ENCODE measurements at regions of chr5 and their contacts with region 1.

Region 1: DNA sequence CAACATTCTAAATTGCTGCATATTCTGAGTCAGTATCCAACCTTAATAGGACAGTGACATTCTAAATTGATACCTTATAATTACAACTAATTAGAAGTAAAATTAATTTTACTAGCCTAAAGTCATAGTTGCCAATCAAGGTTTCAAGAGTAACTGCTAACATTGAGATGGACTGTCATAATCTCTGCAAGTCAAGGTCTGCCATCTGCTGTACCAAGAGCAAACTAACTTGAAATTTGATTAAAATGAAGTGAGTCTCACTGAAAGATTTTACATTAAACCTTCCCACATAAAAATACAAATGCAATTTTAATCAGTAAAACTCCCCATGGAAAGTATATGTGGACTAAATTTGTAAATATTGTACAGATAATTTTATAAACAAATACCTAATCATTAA is 235.3 kb downstream of the PRDM9 start:
- DNase-seq: peak; percentile 11
- H3K4me3 Mint-ChIP-seq: no peak overlapping the region
- H3K27ac Mint-ChIP-seq: no peak overlapping the region
- H3K4me1 Mint-ChIP-seq: no peaks in the 10 kb centered on the region
- H3K27me3 Mint-ChIP-seq: no peaks in the 10 kb centered on the region
- CTCF ChIP-seq: peak; percentile 17

Region 2: DNA sequence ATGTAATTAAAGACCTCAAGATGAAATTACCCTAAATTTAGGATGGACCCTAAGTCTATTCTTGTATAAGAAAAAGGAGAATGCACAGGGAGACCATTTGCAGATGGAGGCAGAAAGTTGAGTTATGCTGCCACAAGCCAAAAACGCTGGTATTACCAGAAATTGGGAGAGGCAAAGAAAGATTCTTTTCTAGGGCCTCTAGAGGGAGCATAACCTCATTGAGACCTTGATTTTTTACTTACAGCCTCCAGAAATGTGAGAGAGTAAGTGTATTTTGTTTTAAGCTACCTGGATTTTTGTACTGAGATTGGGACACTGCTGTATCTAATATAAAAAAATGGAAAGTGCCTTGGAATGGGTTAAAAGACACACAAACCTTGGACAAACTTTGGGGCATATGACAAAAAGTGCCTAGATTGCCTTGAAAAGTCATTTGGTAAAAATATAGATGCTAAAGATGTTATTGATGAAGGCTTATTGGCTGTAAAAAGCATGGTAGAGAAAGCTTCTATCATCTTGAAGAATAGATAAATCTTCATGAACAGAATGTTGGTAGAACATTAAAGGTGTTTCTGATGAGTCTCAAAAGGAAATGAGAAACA is 409.9 kb before region 1 on chr5:
- CTCF ChIA-PET with region 1: interaction called, 4 read pairs
- POLR2A ChIA-PET with region 1: no interaction called
- intact Hi-C with region 1: loop called (anchors 5 kb)
- DNase-seq: peak; percentile 51
- H3K4me3 Mint-ChIP-seq: no peak overlapping the region
- H3K27ac Mint-ChIP-seq: no peak overlapping the region
- H3K4me1 Mint-ChIP-seq: no peaks in the 10 kb centered on the region
- H3K27me3 Mint-ChIP-seq: no peaks in the 10 kb centered on the region
- CTCF ChIP-seq: peak; percentile 55

Region 3: DNA sequence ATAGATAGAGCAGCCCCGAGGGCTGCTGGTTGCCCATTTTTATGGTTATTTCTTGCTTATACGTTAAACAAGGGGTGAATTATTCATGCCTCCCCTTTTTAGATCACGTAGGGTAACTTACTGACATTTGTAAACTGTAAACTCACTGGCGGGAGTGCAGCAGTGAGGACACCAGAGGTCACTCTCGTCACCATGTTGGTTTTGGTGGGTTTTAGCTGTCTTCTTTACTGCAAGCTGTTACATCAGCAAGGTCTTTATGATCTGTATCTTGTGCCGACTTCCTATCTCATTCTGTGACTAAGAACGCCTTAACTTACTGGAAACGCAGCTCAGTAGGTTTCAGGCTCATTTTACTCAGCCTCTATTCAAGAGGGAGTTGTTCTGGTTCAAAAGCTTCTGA is 390.3 kb before region 1 on chr5:
- CTCF ChIA-PET with region 1: no interaction called
- POLR2A ChIA-PET with region 1: no interaction called
- intact Hi-C with region 1: loop called (anchors 1 kb)
- DNase-seq: peak; percentile 39
- H3K4me3 Mint-ChIP-seq: no peak overlapping the region
- H3K27ac Mint-ChIP-seq: no peak overlapping the region
- H3K4me1 Mint-ChIP-seq: no peaks in the 10 kb centered on the region
- H3K27me3 Mint-ChIP-seq: no peaks in the 10 kb centered on the region
- CTCF ChIP-seq: peak; percentile 34

Region 4: DNA sequence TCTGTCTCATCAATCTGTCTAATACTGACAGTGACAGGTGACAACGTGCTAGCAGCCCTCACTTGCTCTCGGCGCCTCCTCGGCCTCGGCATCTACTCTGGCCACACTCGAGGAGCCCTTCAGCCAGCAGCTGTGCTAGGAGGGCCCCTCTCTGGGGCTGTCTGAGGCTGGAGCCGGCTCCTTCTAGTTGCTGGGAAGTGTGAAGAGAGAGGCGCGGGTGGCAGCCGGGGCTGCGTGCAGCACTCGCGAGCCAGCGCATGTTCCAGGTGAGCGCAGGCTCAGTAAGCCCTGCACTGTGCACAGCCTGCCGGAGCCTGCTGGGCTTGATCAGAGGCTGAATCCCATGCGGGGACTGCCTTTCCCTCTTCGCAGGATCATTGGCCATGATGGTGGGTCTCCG is 571.4 kb after region 1 on chr5:
- CTCF ChIA-PET with region 1: no interaction called
- POLR2A ChIA-PET with region 1: no interaction called
- intact Hi-C with region 1: no loop called
- DNase-seq: no peak
- H3K4me3 Mint-ChIP-seq: no peak overlapping the region
- H3K27ac Mint-ChIP-seq: no peak overlapping the region
- H3K4me1 Mint-ChIP-seq: no peaks in the 10 kb centered on the region
- H3K27me3 Mint-ChIP-seq: no peaks in the 10 kb centered on the region
- CTCF ChIP-seq: no peak

Region 5: DNA sequence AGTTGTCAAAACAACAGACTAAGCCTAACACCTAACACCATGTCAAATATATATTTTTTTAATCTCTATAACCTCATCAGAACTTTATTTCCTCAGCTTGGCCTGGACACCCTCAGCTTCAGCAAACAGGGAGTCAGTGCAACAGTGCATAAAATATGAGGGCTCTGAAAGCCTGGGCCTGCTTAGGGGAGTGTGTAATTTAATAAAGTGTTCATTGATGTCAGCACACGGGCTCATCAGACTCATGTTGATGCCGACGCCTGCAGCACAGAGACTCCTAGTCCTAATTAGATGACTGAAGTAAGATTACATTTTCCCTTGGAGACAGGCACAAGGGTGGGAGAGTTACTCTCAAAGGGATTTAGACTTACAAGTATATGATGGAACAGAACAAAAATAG is 864.3 kb after region 1 on chr5:
- CTCF ChIA-PET with region 1: no interaction called
- POLR2A ChIA-PET with region 1: no interaction called
- intact Hi-C with region 1: no loop called
- DNase-seq: no peak
- H3K4me3 Mint-ChIP-seq: no peak overlapping the region
- H3K27ac Mint-ChIP-seq: no peak overlapping the region
- H3K4me1 Mint-ChIP-seq: no peaks in the 10 kb centered on the region
- H3K27me3 Mint-ChIP-seq: no peaks in the 10 kb centered on the region
- CTCF ChIP-seq: no peak